Testis (tissue), 5 donors: ENCODE measurements at regions of chr18 and their contacts with region 1.

Region 1: DNA sequence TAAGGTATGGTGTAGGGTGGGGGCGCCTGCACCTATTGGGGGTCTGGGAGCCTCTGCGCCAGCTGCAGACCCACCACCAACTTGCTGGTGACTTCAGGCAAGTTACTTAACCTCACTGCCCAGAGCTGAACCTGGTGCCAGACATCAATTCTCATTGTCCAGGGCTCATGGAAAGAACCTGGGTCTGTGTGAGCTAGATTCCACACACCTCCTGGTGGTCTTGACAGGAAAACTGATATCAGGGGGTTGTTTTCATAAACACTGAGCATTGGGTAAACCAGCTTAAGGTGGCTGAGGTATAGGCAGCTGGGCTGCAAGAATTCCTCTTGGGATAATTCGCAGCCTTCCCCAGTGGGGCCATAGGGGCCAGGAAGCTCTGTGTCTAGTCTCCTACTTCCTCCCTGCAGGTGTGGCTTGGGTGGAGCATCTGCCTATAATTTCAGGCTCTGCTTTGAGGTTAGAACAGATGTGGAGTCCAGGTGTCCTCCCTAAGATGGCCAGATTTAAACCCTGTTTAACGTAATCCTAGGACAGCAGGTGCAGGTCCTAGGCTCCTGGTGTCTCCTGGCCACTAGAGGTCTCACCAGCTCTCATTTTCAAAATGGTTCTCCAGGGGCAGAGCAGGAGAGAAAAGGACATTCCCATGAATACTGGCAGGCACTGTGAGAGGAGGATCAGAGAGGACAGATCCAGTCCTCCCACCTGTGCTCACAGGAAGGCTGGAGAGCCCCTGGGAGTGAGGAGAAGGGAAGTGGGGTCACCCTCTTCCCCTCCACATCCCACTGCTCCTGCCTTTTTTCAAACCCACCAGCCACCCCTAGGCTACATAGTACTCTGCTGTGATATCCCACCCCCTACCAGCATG is 100.4 kb upstream of the SMAD2 start:
- DNase-seq: peak; percentile 79
- H3K4me3 ChIP-seq: no peak overlapping the region
- H3K27ac ChIP-seq: no peak overlapping the region
- H3K4me1 ChIP-seq: peaks cover 59% of the 10 kb centered on the region
- H3K27me3 ChIP-seq: no peaks in the 10 kb centered on the region
- CTCF ChIP-seq: peak; percentile 66 to 78 (median 72)
- POLR2A ChIP-seq: no peak

Region 2: DNA sequence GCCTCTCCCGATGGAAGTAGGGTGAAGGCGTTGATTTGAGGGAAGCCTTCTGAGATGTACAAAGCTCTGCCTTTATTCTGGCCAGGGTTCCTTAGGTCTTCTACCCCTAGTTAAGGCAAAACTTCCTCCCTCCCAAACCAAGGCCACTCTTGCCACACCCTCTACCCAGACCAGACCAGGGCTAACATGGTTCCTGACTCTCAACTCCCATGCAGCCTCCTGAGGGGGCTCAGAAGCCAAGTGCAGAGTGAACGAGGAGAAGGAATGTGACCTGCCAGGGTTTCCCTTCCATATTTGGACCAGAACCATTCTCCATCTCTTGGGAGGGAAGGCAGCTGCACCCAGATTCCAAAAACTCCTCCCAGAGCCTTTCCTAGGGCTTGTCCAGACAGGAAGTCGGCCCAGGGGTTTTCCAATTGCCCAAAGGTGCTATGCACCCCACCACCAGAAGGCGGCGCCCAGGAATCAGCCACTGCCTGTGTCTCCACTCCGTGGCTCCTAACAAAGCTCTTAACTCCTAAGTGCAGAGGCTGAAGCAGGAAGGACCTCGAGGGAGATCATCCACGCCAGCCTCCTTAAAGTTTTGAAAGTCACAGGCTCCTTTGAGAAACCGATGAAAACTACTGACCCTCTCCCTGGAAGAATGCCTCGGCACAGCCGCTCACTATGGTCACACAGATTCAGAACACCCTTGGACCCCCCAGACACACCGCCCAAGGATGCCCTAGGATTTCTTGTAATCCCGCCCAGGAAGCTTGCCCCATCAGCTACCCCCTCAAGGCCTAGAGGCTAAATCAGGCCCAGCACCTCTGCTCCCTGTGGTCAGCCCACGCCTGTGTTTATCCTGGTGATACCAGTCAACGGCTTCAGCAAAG is 258.2 kb before region 1 on chr18:
- intact Hi-C with region 1: no loop called
- DNase-seq: peak; percentile 72
- H3K4me3 ChIP-seq: no peak overlapping the region
- H3K27ac ChIP-seq: no peak overlapping the region
- H3K4me1 ChIP-seq: no peaks in the 10 kb centered on the region
- H3K27me3 ChIP-seq: no peaks in the 10 kb centered on the region
- CTCF ChIP-seq: peak; percentile 43 to 77 (median 68)
- POLR2A ChIP-seq: no peak

Region 3: DNA sequence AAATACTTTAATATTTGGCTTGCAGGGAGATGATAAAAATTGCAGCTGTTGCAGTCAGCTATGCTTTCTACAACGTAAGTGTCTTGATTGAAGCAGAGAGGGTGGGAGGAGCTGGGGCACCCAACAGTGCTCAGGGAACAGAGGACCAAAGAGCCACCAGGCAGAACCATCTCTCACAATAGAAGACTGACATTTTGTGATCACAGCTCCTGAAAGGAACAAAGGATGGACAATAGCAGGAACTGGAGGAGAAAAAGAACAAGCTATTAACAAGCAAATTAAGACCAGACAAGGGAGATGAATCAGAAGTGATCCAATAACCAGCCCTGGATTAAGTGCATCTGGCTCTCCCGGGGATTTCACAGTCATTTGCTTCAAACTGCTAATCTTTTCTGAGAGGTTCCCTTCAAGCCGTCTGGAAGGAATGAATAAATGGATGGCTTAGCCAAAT is 34.7 kb before region 1 on chr18:
- intact Hi-C with region 1: no loop called
- DNase-seq: no peak
- H3K4me3 ChIP-seq: no peak overlapping the region
- H3K27ac ChIP-seq: no peak overlapping the region
- H3K4me1 ChIP-seq: no peaks in the 10 kb centered on the region
- H3K27me3 ChIP-seq: no peaks in the 10 kb centered on the region
- CTCF ChIP-seq: no peak
- POLR2A ChIP-seq: no peak

Region 4: DNA sequence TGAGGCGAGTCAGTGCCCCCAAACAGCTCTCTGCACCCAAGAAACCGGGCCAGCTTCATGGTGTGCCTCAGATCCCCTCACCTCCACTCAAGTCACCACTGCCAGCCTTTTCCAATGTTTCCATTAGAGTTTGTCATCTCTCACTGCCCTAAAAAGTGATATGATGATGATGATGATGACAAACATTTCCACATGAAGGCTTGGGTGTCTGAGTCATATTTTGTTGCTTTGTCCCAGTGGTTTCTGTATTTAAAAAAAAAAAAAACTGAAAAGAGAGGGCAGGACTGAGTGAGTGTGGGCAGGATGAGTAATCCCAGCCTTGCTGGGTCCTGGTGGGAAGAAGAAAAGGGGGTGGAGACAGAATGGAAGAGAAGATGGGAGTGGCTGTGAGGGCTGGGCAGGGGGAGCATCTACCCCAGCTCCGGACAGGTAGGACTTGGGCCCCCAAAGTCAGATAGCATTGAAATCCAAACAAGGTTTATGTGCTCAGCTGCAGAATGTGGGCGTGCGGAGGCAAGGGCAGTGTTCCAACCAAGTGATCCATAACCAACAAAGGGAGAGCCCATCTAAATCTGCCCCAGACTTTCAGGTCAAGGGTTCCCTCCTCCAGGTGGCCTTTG is 299.7 kb after region 1 on chr18:
- intact Hi-C with region 1: loop called (anchors 10 kb)
- DNase-seq: no peak
- H3K4me3 ChIP-seq: no peak overlapping the region
- H3K27ac ChIP-seq: no peak overlapping the region
- H3K4me1 ChIP-seq: peaks cover 15% of the 10 kb centered on the region
- H3K27me3 ChIP-seq: no peaks in the 10 kb centered on the region
- CTCF ChIP-seq: no peak
- POLR2A ChIP-seq: no peak

Region 5: GRCh38 chr18:48441405-48441881 is 410.6 kb after region 1 on chr18:
- intact Hi-C with region 1: loop called (anchors 5 kb)
- DNase-seq: peak; percentile 40
- H3K4me3 ChIP-seq: no peak overlapping the region
- H3K27ac ChIP-seq: peak overlapping the region in 1 of 2 donors; percentile 56
- H3K4me1 ChIP-seq: peaks cover 17% of the 10 kb centered on the region
- H3K27me3 ChIP-seq: no peaks in the 10 kb centered on the region
- CTCF ChIP-seq: no peak
- POLR2A ChIP-seq: no peak